Activated naive CD4-positive, alpha-beta T cell treated with anti-CD3 and anti-CD28 coated beads, Interleukin-2, amount 10 ng/mL, durations not matched to agents 7 days and 5 days (primary cell): ENCODE measurements at regions of chr11 and their contacts with region 1.

Region 1: GRCh38 chr11:108121274-108122155 is at the start of gene ACAT1:
- DNase-seq: peak; percentile 97
- H3K4me3 Mint-ChIP-seq: peak within 1 kb of the TSS; percentile 82
- H3K27ac Mint-ChIP-seq: peak within 1 kb of the TSS; percentile 77
- H3K4me1 Mint-ChIP-seq: peaks cover 49% of the 10 kb centered on the region
- H3K27me3 Mint-ChIP-seq: no peaks in the 10 kb centered on the region

Region 2: GRCh38 chr11:108069947-108070346 is 51.6 kb before region 1 on chr11:
- CTCF ChIA-PET with region 1: no interaction called
- DNase-seq: no peak
- H3K4me3 Mint-ChIP-seq: no peak overlapping the region
- H3K27ac Mint-ChIP-seq: peak overlapping the region; percentile 76
- H3K4me1 Mint-ChIP-seq: peaks cover 17% of the 10 kb centered on the region
- H3K27me3 Mint-ChIP-seq: no peaks in the 10 kb centered on the region

Region 3: DNA sequence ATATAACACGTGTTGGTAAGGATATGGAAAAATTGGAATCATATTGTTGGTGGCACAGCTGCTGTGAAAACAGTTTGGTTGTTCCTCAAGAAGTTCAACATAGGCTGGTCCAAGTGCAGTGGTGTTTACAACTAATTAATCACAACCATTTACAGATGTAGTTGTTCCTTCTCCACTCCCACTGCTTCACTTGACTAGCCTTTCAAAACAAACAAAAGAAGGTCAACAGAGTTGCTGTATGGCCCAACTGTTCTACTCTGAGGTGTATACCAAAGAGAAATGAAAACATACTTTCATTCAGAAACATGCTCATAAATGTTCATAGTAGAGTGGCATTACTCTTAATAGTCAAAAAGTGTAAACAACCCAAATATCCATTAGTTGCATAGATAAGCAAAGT is 36.7 kb before region 1 on chr11:
- CTCF ChIA-PET with region 1: no interaction called
- DNase-seq: no peak
- H3K4me3 Mint-ChIP-seq: no peak overlapping the region
- H3K27ac Mint-ChIP-seq: no peak overlapping the region
- H3K4me1 Mint-ChIP-seq: no peaks in the 10 kb centered on the region
- H3K27me3 Mint-ChIP-seq: no peaks in the 10 kb centered on the region

Region 4: DNA sequence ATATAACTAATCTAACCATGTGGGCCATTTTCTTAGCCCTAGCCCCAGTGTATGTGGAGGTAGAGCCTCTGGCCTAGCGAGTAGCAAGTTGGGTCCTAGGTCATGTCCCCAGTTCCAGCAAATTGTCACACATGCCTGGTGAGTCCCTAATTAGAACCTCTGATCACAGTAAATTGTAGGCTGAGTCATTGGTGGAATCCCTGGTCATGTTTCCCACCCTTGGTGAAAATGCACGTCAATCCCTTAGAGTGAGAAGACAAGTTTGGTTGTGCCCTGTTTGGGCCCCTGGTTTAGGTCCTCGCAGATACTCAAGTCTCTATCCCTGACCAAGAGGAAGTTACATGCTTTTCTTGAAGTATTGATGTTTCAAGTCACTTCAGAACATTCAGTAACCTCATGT is 148.1 kb after region 1 on chr11:
- CTCF ChIA-PET with region 1: no interaction called
- DNase-seq: no peak
- H3K4me3 Mint-ChIP-seq: no peak overlapping the region
- H3K27ac Mint-ChIP-seq: no peak overlapping the region
- H3K4me1 Mint-ChIP-seq: peaks cover 2% of the 10 kb centered on the region
- H3K27me3 Mint-ChIP-seq: no peaks in the 10 kb centered on the region

Region 5: DNA sequence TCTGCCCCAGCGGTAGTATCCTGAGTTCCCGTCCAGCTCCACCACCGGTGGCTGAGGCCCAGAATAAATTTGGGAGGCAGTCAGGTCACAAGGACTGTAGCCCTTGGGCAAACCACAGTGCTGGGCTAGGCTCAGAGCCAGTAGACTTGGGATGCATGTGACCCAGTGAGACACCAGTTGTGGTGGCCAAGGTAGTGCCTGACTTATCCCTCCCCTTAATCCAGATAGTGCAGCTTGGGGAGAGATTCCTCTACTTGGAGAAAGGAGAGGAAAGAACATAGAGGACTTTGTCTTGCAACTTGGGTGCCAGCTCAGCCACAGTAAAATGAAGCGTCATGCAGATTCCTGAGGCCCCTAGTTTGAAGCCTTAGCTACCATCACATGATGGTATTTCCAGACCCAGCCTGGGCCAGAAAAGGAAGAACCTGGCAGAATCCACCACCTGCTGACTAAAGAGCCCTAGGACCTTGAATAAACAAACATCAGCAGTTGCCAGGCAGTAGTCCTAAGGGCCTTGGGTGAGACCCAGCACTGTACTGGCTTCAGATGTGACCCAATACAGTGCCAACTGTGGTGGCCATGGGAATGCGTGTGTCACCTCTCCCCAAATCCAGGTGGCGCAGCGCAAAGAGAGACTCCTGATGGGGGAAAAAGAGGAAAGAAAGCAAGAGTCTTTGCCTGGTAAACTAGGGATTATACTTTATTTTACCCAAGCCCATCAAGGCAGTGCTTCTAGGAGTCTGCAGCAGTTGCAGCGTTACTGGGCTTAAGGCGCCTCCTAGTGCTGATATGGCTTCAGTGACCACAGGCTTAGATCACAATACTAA is 526.4 kb after region 1 on chr11:
- CTCF ChIA-PET with region 1: interaction called, 91 read pairs
- DNase-seq: peak; percentile 79
- H3K4me3 Mint-ChIP-seq: no peak overlapping the region
- H3K27ac Mint-ChIP-seq: no peak overlapping the region
- H3K4me1 Mint-ChIP-seq: no peaks in the 10 kb centered on the region
- H3K27me3 Mint-ChIP-seq: peaks cover 8% of the 10 kb centered on the region

Region 6: GRCh38 chr11:108654994-108655631 is 533.6 kb after region 1 on chr11:
- CTCF ChIA-PET with region 1: interaction called, 91 read pairs
- DNase-seq: peak; percentile 46
- H3K4me3 Mint-ChIP-seq: no peak overlapping the region
- H3K27ac Mint-ChIP-seq: no peak overlapping the region
- H3K4me1 Mint-ChIP-seq: no peaks in the 10 kb centered on the region
- H3K27me3 Mint-ChIP-seq: peaks cover 19% of the 10 kb centered on the region